Ascending aorta (tissue), 2 donors: ENCODE measurements at regions of chr17 and their contacts with region 1.

Region 1: GRCh38 chr17:32927724-32928585 is at the start of gene TMEM98:
- DNase-seq: no peak
- H3K4me3 ChIP-seq: peak within 1 kb of the TSS; percentile 78 to 85
- H3K27ac ChIP-seq: peak within 1 kb of the TSS; percentile 69 to 88
- H3K4me1 ChIP-seq: peaks cover 3 to 10% of the 10 kb centered on the region in 2 donors
- H3K27me3 ChIP-seq: no peaks in the 10 kb centered on the region
- CTCF ChIP-seq: no peak
- total RNA-seq, gene TMEM98: 50.6 TPM

Region 2: DNA sequence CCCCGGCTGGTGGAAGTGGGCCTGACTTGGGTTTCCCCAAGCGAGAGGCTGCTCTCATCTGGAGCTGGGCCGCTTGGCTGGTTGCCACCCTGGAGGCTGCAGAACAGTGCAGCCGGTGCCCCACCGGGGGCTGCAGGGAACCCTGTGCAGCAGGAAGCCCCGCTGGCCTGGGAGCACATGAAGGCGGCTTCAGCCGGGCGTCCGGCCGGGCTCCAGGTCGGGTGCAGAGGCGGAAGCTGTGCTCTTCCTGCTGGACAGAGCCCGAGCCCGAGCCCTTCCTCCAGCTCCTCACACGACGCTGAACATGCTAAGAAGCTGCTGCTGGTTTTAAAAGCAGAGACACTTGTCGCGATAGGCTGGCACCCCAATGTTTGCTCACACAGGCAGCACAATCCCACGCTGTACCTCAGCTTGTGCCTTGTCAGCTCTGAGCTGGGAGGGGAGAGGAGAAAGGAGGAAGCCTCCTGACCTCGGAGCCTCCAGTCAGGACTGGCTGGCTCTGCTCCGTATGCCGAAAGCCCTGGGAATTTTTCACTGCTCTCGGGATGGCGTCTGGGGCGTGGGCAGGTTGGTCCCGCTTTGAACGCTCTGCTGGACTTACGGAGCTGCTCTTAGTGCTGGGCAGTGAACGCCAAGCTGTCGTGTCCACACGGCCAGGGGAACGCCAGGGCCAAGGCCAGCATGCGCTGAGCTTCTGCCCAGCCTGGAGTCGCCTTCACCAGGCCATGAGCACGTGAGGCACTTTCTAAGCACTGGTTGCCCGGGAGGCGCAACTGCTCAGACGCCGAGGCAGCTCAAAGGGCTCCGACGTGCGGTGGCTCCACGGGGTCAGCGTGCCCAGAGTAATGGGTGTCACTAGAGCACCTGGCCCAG is 432.4 kb before region 1 on chr17:
- intact Hi-C with region 1: loop called (anchors 5 kb)
- DNase-seq: no peak
- H3K4me3 ChIP-seq: peak overlapping the region in 1 of 2 donors; percentile 32
- H3K27ac ChIP-seq: peak overlapping the region; percentile 67 to 92
- H3K4me1 ChIP-seq: peaks cover 20 to 33% of the 10 kb centered on the region in 2 donors
- H3K27me3 ChIP-seq: no peaks in the 10 kb centered on the region
- CTCF ChIP-seq: no peak

Region 3: DNA sequence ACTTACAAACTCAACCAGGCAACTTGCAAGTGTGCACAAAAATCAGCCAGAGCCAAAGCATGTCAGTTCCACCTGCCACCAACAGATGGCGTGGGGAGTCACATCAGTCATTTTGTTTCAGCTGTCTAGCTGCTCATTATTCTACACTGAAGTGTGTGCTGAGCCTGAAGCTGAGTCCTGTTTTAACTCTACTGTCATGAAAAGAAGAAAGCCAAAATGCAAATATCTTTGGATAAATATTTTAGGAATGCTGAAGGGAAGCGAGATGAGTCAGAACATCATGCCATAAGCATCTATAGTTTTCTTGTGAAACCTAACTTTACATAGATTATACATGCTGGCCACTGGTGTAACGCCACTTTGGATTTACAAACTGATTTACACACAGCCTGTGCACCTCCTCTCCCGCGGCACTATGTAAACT is 268.5 kb before region 1 on chr17:
- intact Hi-C with region 1: loop called (anchors 5 kb)
- DNase-seq: peak; percentile 12 to 85
- H3K4me3 ChIP-seq: no peak overlapping the region
- H3K27ac ChIP-seq: no peak overlapping the region
- H3K4me1 ChIP-seq: peaks cover 0 to 19% of the 10 kb centered on the region in 2 donors
- H3K27me3 ChIP-seq: no peaks in the 10 kb centered on the region
- CTCF ChIP-seq: peak; percentile 77 to 92 (median 90)

Region 4: DNA sequence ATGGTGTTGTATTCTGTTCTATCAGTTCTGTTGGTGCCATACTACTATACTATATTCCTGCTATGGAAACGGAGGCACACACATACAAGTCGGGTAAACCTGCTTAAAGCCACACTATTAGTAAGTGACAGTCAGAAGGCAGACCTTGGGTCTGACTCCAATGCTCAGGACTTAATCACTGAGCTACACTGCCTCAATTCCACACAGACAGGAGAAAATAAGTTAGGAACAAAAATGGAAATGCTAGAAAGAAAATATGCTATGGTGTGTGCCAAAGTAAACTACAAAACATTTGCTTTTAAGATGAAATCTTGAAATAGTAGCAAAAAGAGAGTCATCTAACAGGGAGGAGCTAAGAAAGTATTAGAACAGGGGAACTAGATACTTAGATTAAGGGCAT is 99.1 kb before region 1 on chr17:
- intact Hi-C with region 1: no loop called
- DNase-seq: no peak
- H3K4me3 ChIP-seq: no peak overlapping the region
- H3K27ac ChIP-seq: peak overlapping the region; percentile 44 to 81
- H3K4me1 ChIP-seq: peaks cover 0 to 47% of the 10 kb centered on the region in 2 donors
- H3K27me3 ChIP-seq: no peaks in the 10 kb centered on the region
- CTCF ChIP-seq: no peak